ENCODE measurements at regions of chr15 and their contacts with region 1.

Region 1: GRCh38 chr15:66555685-66556084 is 10.1 kb downstream of the LCTL start:
- DNase-seq: no peak
- ATAC-seq: no peak
- H3K4me3 ChIP-seq: no peak overlapping the region
- H3K27ac ChIP-seq: no peak overlapping the region
- H3K4me1 ChIP-seq: no peaks in the 10 kb centered on the region
- H3K27me3 ChIP-seq: no peaks in the 10 kb centered on the region
- CTCF ChIP-seq: no peak
- POLR2A ChIP-seq: no peak
- RAD21 ChIP-seq: no peak

Region 2: DNA sequence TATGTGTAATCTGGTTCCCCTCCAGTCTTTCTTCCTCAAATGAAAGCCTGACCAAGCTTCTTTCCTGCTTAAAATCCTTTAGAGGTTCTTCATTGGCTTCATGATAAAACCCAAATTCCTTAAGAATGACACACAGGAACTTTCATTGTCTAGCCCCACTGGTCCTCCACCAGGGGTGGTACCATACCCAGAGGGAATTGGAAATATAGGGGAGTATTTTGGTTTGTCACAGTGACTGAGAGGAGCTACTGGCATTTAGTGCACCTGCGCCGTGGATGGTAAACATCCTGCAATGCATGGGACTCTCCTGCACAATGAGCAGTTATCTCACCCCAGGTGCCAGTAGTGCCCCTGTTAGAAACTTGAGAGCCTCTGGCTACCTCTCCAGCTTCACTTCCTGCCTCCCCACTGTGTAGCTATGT is 39.8 kb before region 1 on chr15:
- CTCF ChIA-PET with region 1: no interaction called
- POLR2A ChIA-PET with region 1: no interaction called
- dilution Hi-C with region 1: no loop called
- in situ Hi-C with region 1: no loop called
- intact Hi-C with region 1: loop called (anchors 1 kb)
- DNase-seq: no peak
- ATAC-seq: no peak
- H3K4me3 ChIP-seq: no peak overlapping the region
- H3K27ac ChIP-seq: no peak overlapping the region
- H3K4me1 ChIP-seq: no peaks in the 10 kb centered on the region
- H3K27me3 ChIP-seq: no peaks in the 10 kb centered on the region
- CTCF ChIP-seq: no peak
- POLR2A ChIP-seq: no peak
- RAD21 ChIP-seq: no peak

Measured in IMR-90 (cell line).